ENCODE measurements at regions of chr17 and their contacts with region 1.

Region 1: GRCh38 chr17:7035591-7036368 is at the start of gene SLC16A13:
- DNase-seq: peak; percentile 99
- H3K4me3 ChIP-seq: peak within 1 kb of the TSS; percentile 62 to 73 (median 64)
- H3K27ac ChIP-seq: peak within 1 kb of the TSS; percentile 84 to 87 (median 86)
- H3K4me1 ChIP-seq: peaks cover 0 to 25% (median 16%) of the 10 kb centered on the region in 4 donors
- H3K27me3 ChIP-seq: no peaks in the 10 kb centered on the region
- CTCF ChIP-seq: no peak
- EP300 ChIP-seq: no peak
- POLR2A ChIP-seq: peak; percentile 88
- total RNA-seq, gene SLC16A13: 2.4 to 8.6 (median 3.5) TPM in 3 of 4 donors, not detected in the other

Region 2: GRCh38 chr17:7280519-7281429 is 245.0 kb after region 1 on chr17:
- in situ Hi-C with region 1: loop called in 2 of 4 experiments (anchors 25 kb)
- intact Hi-C with region 1: no loop called
- DNase-seq: peak; percentile 91
- H3K4me3 ChIP-seq: peak overlapping the region; percentile 2 to 71 (median 48)
- H3K27ac ChIP-seq: peak overlapping the region; percentile 84 to 89 (median 86)
- H3K4me1 ChIP-seq: peaks cover 12 to 42% (median 33%) of the 10 kb centered on the region in 4 donors
- H3K27me3 ChIP-seq: no peaks in the 10 kb centered on the region
- CTCF ChIP-seq: peak; percentile 86 to 99 (median 96)
- EP300 ChIP-seq: peak; percentile 1
- POLR2A ChIP-seq: peak; percentile 17

Region 3: DNA sequence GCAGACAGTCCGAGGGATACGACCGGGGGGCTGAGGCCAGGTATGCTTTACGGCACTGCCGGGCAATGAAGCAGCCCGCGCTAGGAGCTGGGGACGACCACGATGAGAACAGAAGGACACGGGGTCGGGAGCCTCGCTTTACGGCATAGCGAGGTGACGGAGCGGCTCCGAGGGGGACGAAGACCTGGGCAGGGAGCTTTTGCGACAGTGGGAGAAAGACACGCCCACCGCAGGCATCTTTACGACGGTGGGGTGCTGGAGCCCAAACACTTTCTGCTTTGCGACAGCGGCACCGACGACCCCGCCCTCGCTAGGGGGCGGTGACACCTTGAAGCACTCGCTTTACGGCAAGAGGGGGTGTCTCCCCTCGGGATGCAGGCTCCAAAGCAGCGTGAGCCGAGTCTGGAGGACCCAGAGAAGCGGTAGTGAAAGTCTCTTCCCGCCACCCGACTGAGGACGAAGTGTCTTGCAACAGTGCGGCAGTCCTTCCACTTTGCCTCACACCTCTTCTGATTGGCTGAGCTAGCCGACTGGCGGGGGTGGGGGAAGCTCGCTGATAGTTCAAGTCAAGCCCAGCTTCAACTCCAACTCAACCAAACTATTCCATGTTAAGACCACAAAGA is 293.7 kb after region 1 on chr17:
- in situ Hi-C with region 1: loop called in 1 of 4 experiments (anchors 25 kb)
- intact Hi-C with region 1: no loop called
- DNase-seq: peak; percentile 99
- H3K4me3 ChIP-seq: peak overlapping the region; percentile 63 to 89 (median 77)
- H3K27ac ChIP-seq: peak overlapping the region; percentile 90 to 95 (median 92)
- H3K4me1 ChIP-seq: peaks cover 7 to 21% (median 14%) of the 10 kb centered on the region in 4 donors
- H3K27me3 ChIP-seq: no peaks in the 10 kb centered on the region
- CTCF ChIP-seq: no peak
- EP300 ChIP-seq: no peak
- POLR2A ChIP-seq: peak; percentile 79